Posterior cingulate gyrus (tissue), 11 donors: ENCODE measurements at regions of chr3 and their contacts with region 1.

Region 1: DNA sequence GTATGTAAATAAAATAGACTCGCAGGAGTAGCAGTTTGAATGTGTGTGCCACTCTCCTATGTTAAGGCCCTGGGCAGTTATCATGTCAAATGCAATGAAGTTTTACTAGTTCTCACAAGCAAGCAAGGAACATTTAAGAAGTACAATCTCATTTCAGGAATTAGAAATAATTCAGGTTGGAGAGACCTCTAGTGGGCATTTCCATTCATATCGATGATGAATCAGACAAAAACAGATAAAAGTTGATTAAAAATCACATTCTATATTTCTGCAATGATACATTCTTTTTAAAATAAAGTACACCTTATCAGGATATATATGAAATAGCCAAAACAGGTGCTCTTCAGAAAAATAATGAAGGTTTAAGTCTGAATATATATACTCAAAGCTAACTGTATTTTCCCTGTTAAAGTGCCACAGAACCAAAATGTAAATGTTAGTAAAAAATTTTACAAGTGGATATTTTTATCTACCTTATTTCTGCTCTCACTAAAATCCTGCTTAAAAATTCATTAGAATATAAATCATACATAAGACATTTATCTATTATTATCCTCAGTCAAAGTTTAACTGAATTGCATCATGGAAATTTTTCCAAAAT is 492.4 kb upstream of the FRG2C start:
- DNase-seq: no peak

Region 2: GRCh38 chr3:73868688-73869315 is 1302.9 kb before region 1 on chr3:
- intact Hi-C with region 1: loop called (anchors 2 kb)
- DNase-seq: peak in 4 of 10 donors; percentile 16 to 41 (median 34)

Region 3: DNA sequence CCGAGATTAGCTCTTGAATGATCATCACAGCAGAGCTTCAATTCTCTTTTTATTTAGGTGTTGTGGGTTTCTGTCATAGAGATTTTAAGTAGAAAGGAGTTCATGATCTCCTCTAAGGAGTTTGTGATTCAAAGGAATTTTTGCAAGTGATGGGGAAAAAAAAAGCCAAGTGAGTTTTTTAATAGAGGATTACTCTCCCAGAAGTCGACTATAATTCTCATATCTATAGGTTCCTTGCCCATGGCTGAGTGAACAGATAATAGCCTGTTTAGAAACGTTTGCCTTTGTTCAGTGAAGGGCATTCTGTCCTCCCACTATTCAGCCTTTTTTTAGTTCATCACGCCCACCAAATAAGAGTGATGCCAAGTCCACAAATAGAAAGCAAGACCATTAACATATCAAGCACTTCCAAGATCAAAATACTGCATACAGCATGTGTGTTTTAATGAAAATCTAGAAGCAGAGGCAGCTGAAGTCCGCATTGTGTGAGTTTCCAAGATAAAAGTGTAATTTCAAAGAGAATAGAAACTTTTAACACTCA is 158.9 kb before region 1 on chr3:
- intact Hi-C with region 1: no loop called
- DNase-seq: no peak

Region 4: DNA sequence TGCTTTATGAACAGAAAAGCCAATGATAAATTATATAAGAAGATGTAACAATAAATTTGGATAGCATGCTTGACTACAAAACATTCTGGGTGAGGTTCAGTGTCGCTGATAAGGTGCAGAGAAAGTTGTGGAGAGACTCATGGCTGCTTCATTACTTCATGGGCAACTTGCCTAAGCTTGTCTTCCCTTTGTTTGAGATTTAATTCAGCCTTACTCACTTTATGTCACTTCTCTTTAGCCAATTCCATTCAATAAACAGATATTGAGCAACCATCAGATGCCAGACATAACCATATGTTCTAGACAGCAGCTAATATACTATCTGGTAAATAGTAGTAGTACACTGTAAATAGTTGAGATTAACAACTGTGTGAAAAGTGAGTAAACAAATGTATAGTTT is 90.9 kb after region 1 on chr3:
- intact Hi-C with region 1: no loop called
- DNase-seq: no peak